IMR-90 (cell line): ENCODE measurements at regions of chr3 and their contacts with region 1.

Region 1: GRCh38 chr3:58568572-58569286 is 8.5 kb downstream of the FAM107A start:
- DNase-seq: peak; percentile 63
- ATAC-seq: peak; percentile 73
- H3K4me3 ChIP-seq: no peak overlapping the region
- H3K27ac ChIP-seq: no peak overlapping the region
- H3K4me1 ChIP-seq: peaks cover 2% of the 10 kb centered on the region; the same call in 1 of the 2 replicates
- H3K27me3 ChIP-seq: no peaks in the 10 kb centered on the region
- CTCF ChIP-seq: peak; percentile 88
- POLR2A ChIP-seq: no peak
- RAD21 ChIP-seq: peak; percentile 73

Region 2: GRCh38 chr3:58989163-58989562 is 420.4 kb after region 1 on chr3:
- CTCF ChIA-PET with region 1: no interaction called
- POLR2A ChIA-PET with region 1: no interaction called
- dilution Hi-C with region 1: no loop called
- in situ Hi-C with region 1: loop called (anchors 25 kb)
- intact Hi-C with region 1: loop called (anchors 10 kb)
- DNase-seq: peak; percentile 87
- ATAC-seq: peak; percentile 76
- H3K4me3 ChIP-seq: no peak overlapping the region
- H3K27ac ChIP-seq: no peak overlapping the region
- H3K4me1 ChIP-seq: peaks cover 9% of the 10 kb centered on the region; the same call in 1 of the 2 replicates
- H3K27me3 ChIP-seq: no peaks in the 10 kb centered on the region
- CTCF ChIP-seq: no peak
- POLR2A ChIP-seq: no peak
- RAD21 ChIP-seq: no peak